K562 (cell line): ENCODE measurements at regions of chr14 and their contacts with region 1.

Region 1: GRCh38 chr14:67240978-67241414 is 239 bp upstream of the PALS1 start:
- DNase-seq: peak; percentile 91 to 93 (median 92)
- ATAC-seq: peak; percentile 97
- H3K4me3 ChIP-seq: peak overlapping the region; percentile 81
- H3K27ac ChIP-seq: peak overlapping the region; percentile 93
- H3K4me1 ChIP-seq: peaks cover 3 to 6% of the 10 kb centered on the region in 2 experiments; a peak in 2 of 5 replicates
- H3K27me3 ChIP-seq: no peaks in the 10 kb centered on the region
- CTCF ChIP-seq: no peak
- EP300 ChIP-seq: no peak
- POLR2A ChIP-seq: no peak; the same call in 1 of the 2 replicates
- RAD21 ChIP-seq: no peak

Region 2: GRCh38 chr14:67251573-67252226 is 10.7 kb after region 1 on chr14:
- CTCF ChIA-PET with region 1: no interaction called
- POLR2A ChIA-PET with region 1: interaction called, 11 read pairs
- in situ Hi-C with region 1: no loop called
- intact Hi-C with region 1: no loop called
- DNase-seq: no peak
- ATAC-seq: no peak
- H3K4me3 ChIP-seq: no peak overlapping the region
- H3K27ac ChIP-seq: no peak overlapping the region
- H3K4me1 ChIP-seq: no peaks in the 10 kb centered on the region; a peak in 1 of 5 replicates
- H3K27me3 ChIP-seq: no peaks in the 10 kb centered on the region
- CTCF ChIP-seq: no peak
- EP300 ChIP-seq: no peak
- POLR2A ChIP-seq: no peak
- RAD21 ChIP-seq: no peak

Region 3: GRCh38 chr14:67311905-67312304 is 70.9 kb after region 1 on chr14:
- CTCF ChIA-PET with region 1: no interaction called
- POLR2A ChIA-PET with region 1: no interaction called
- in situ Hi-C with region 1: no loop called
- intact Hi-C with region 1: no loop called
- DNase-seq: no peak
- ATAC-seq: no peak
- H3K4me3 ChIP-seq: no peak overlapping the region
- H3K27ac ChIP-seq: no peak overlapping the region
- H3K4me1 ChIP-seq: no peaks in the 10 kb centered on the region
- H3K27me3 ChIP-seq: no peaks in the 10 kb centered on the region
- CTCF ChIP-seq: no peak
- EP300 ChIP-seq: no peak
- POLR2A ChIP-seq: no peak
- RAD21 ChIP-seq: no peak

Region 4: GRCh38 chr14:67359775-67360648 is 119.0 kb after region 1 on chr14 and contains the starts of genes ATP6V1D and EIF2S1:
- CTCF ChIA-PET with region 1: no interaction called
- POLR2A ChIA-PET with region 1: no interaction called
- in situ Hi-C with region 1: no loop called
- intact Hi-C with region 1: loop called (anchors 5 kb)
- DNase-seq: peak; percentile 89 to 98 (median 92)
- ATAC-seq: peak; percentile 83
- H3K4me3 ChIP-seq: peak within 1 kb of the TSS; percentile 85
- H3K27ac ChIP-seq: peak within 1 kb of the TSS; percentile 98
- H3K4me1 ChIP-seq: peaks cover 2 to 16% of the 10 kb centered on the region in 2 experiments; a peak in 2 of 5 replicates
- H3K27me3 ChIP-seq: no peaks in the 10 kb centered on the region
- CTCF ChIP-seq: peak; percentile 49 to 99 (median 88)
- EP300 ChIP-seq: peak; percentile 17; the same call in 1 of the 2 replicates
- POLR2A ChIP-seq: peak; percentile 90
- RAD21 ChIP-seq: peak; percentile 12 to 40; a peak in 2 of 4 replicates
- polyA plus RNA-seq, gene ATP6V1D: 86.3 to 91.0 TPM
- polyA plus RNA-seq, gene EIF2S1: 717 to 1,018 TPM